ENCODE measurements at regions of chr2 and their contacts with region 1.

Region 1: DNA sequence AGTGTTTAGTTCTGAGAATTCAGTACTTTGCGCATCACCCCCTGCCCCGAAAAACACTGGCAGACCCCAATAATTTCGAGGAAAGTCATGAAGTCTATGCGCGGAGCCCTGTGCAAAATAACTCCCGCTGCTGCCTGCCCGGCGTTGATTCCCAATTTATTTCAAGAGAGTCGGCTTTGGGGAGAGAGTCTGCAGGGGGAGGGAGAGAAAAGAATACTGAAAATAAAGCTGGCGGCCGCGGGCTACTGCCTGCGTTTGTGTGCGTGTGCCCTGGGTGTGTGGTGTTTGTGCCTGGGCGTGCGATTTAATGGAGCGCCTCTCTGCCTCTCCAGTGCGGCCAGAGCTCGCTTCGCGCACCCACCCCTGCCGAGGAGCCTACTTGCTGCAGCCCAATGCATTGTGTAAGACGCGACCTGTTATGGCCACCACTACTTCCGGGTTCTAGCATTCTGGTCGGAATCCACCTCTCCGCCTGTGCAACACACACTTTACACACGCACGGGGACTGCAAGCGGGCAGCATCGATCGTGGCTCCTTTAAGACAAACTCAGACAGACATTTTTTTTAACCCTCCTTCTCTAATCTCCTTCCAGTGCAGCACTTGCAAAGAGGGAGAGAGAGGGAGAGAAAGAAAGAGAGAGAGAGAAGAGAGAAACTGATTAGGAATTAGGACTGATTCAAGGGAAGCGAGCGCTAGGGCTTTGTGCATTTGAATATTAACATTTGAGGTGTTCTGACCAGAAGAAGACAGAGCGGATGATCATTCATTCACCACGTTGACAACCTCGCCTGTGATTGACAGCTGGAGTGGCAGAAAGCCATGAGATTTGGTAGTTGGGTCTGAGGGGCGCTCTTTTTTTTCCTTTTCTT is at the start of gene MEIS1:
- DNase-seq: peak; percentile 98
- H3K4me3 ChIP-seq: peak within 1 kb of the TSS; percentile 97
- H3K27ac ChIP-seq: peak within 1 kb of the TSS; percentile 84
- H3K4me1 ChIP-seq: no peaks in the 10 kb centered on the region
- H3K27me3 ChIP-seq: no peaks in the 10 kb centered on the region
- total RNA-seq, gene MEIS1: 19.1 and 21.4 TPM in 2 replicates

Region 2: DNA sequence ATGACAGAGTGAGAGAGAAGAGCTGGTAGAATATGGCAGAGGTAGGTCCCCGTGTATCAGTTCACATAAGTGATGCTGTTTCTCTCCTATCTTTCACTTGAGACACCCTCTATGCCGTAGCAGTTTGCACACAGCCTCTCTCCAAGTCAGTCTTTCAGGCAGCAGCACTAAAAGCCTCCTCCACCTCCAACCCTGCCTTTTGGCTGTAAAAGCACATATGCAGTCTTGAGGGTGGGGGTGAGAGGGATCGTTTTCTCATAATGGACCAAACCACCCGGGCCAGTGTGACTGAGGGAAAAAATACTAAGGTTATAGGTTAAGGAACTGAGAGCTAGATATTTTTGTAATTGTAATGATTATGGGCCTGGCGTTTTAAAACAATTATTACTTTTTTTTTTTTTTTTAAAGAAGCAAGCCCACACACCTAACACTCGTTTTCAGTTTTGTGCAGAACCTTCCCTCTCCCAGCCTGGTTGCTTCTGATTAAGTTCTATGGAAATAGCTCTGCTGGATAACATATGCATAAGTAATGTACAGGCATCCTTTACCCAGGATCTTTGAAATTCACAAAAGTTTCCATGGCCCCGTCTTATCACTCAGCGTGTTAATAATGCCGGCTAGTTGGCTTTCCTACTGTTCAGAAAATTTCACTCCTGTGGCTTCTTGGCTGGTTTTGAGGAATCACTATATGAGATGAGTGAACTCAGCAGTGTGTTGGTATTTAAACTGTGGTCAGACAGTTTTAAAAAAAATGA is 112.2 kb before region 1 on chr2:
- in situ Hi-C with region 1: no loop called
- DNase-seq: no peak
- H3K4me3 ChIP-seq: no peak overlapping the region
- H3K27ac ChIP-seq: no peak overlapping the region
- H3K4me1 ChIP-seq: no peaks in the 10 kb centered on the region
- H3K27me3 ChIP-seq: peaks cover 18% of the 10 kb centered on the region; the same call in 1 of the 2 replicates

Region 3: DNA sequence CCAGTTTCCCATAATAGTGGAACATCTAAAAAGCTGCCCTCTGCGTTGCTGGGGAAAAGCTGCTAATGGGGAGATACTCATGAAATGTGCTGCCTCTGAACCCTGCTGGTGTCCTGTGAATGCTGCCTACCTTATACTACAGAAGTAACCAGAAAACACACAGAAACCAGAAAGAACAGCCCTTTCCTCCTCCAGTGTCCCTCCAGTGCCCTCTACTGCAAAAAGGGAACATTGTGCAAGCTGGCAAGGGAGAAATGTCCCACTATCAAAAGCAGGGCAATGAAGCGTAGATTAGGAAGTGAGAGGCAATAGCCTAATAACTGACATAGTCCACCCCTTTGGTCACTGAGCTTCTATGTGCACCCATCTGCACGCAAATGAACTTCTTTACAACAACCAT is 799.5 kb after region 1 on chr2:
- in situ Hi-C with region 1: loop called (anchors 25 kb)
- DNase-seq: peak; percentile 71
- H3K4me3 ChIP-seq: no peak overlapping the region
- H3K27ac ChIP-seq: no peak overlapping the region
- H3K4me1 ChIP-seq: no peaks in the 10 kb centered on the region
- H3K27me3 ChIP-seq: no peaks in the 10 kb centered on the region

Region 4: DNA sequence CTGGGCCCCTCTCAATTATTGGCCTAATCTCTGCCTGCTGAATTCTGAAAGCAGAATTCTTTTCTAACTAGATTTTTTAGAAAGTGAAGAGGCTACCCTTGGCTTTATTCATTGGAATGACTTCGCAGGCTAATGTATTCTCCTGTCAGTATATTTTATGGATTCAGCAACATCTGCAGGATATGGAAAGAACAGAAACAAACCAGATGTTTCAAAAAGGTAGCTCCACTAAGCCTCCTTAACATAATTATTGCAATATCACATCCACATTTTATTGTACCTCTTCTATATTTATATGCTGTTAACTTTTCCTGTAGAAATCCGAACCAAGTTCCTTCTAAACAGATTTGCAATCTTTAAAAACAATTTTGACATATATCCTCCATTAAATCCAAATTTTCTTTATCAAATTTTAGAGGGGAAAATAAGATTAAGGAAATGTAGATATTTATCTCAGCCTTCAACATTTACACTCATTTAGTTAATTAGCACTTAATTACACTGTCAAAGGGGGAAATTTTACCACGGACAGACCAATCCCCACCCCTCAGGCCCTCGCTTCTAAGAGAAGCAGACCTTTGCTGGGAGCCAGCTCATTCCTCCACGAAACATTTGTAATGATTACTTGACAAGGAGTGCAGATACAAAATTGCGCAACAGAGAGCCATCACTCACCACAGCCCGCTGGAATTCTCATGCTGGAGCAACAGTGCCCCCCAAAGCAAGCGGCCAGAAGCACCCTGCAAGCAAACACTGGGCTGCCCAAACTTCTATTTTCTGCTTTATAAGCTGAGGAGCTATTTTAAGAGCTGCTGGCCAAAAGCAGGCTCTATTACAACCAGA is 1215.6 kb after region 1 on chr2:
- in situ Hi-C with region 1: loop called (anchors 25 kb)
- DNase-seq: peak; percentile 95
- H3K4me3 ChIP-seq: peak overlapping the region; percentile 41
- H3K27ac ChIP-seq: peak overlapping the region; percentile 37
- H3K4me1 ChIP-seq: peaks cover 40% of the 10 kb centered on the region
- H3K27me3 ChIP-seq: no peaks in the 10 kb centered on the region

Region 5: DNA sequence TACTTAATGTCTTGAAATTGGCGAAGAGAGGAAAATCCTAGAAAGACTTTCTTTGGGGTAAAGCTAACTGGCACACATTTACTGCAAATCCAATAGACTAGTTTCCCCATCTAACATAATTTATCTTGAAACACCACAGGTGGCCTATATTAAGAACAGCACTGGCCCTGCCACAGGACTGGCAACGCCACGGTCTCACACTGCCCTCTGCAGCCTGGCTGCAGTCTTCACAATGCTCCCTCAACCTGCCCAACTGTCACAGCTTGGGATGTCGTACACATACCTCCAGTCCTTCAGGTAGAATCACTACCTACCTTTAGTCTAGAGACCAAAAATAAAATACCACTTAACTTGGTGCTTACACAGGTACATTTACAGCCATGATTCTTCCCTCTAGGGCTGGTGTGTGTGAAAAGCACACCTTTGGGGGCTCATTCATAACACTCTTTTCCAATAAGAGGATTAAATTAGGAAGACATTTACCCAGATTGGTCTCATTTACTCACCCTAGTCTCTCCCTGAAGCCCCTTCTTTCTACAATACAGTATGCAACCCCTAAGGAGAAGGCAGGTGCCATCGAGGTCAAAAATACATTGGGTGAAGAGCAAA is 1405.7 kb after region 1 on chr2:
- in situ Hi-C with region 1: loop called (anchors 10 kb)
- DNase-seq: peak; percentile 82
- H3K4me3 ChIP-seq: no peak overlapping the region
- H3K27ac ChIP-seq: no peak overlapping the region
- H3K4me1 ChIP-seq: no peaks in the 10 kb centered on the region
- H3K27me3 ChIP-seq: no peaks in the 10 kb centered on the region

Region 6: GRCh38 chr2:68031542-68032160 is 1596.7 kb after region 1 on chr2:
- in situ Hi-C with region 1: loop called (anchors 10 kb)
- DNase-seq: peak; percentile 77
- H3K4me3 ChIP-seq: peak overlapping the region; percentile 30; the same call in 1 of the 2 replicates
- H3K27ac ChIP-seq: no peak overlapping the region
- H3K4me1 ChIP-seq: peaks cover 21% of the 10 kb centered on the region
- H3K27me3 ChIP-seq: no peaks in the 10 kb centered on the region